CD4-positive, alpha-beta memory T cell (primary cell): ENCODE measurements at regions of chr5 and their contacts with region 1.

Region 1: GRCh38 chr5:139711067-139711905 is 63.1 kb downstream of the CXXC5 start:
- DNase-seq: peak; percentile 50 to 74 (median 60)
- H3K4me3 ChIP-seq: peak overlapping the region in 1 of 2 donors; percentile 51
- H3K4me3 Mint-ChIP-seq: peak overlapping the region; percentile 73 to 85 (median 80)
- H3K27ac ChIP-seq: peak overlapping the region; percentile 32
- H3K27ac Mint-ChIP-seq: peak overlapping the region; percentile 56 to 95 (median 69)
- H3K4me1 ChIP-seq: peaks cover 19% of the 10 kb centered on the region
- H3K4me1 Mint-ChIP-seq: peaks cover 8 to 32% (median 16%) of the 10 kb centered on the region in 4 donors
- H3K27me3 ChIP-seq: peaks cover 10% of the 10 kb centered on the region
- H3K27me3 Mint-ChIP-seq: peaks cover 7 to 15% of the 10 kb centered on the region in 2 donors

Region 2: DNA sequence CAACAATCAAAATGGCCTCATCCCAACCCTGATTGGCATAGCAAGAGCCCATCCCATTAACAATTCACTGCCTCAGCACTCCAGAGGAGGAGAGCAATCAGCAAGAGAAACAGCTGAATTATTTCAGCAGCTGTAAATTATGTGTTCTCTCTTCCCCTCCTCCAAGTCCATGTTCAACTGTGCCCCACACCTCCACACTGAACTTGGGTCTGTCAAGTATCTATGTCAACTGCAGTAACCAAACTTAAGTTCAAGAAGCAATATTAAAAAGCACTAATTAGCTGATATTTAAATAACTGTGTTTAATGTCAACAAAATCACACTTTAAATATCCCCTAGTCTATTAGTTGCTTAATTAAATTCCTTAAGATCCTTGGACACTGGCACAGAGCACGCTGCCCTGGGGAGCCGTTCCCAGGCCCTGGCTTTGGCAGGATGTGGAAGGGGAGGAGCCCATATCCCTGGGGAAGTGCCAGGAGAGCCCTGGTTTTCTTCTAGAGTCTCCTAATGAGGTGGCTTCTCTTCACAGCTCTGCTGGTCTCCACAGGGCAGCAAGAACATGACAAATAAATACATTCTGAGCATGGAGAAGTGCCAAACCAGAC is 563.7 kb before region 1 on chr5:
- CTCF ChIA-PET with region 1: no interaction called
- POLR2A ChIA-PET with region 1: no interaction called
- intact Hi-C with region 1: no loop called
- DNase-seq: no peak
- H3K4me3 ChIP-seq: no peak overlapping the region
- H3K4me3 Mint-ChIP-seq: no peak overlapping the region
- H3K27ac ChIP-seq: no peak overlapping the region
- H3K27ac Mint-ChIP-seq: no peak overlapping the region
- H3K4me1 ChIP-seq: no peaks in the 10 kb centered on the region
- H3K4me1 Mint-ChIP-seq: peaks cover 0 to 5% (median under 1%) of the 10 kb centered on the region in 4 donors
- H3K27me3 ChIP-seq: no peaks in the 10 kb centered on the region
- H3K27me3 Mint-ChIP-seq: no peaks in the 10 kb centered on the region

Region 3: DNA sequence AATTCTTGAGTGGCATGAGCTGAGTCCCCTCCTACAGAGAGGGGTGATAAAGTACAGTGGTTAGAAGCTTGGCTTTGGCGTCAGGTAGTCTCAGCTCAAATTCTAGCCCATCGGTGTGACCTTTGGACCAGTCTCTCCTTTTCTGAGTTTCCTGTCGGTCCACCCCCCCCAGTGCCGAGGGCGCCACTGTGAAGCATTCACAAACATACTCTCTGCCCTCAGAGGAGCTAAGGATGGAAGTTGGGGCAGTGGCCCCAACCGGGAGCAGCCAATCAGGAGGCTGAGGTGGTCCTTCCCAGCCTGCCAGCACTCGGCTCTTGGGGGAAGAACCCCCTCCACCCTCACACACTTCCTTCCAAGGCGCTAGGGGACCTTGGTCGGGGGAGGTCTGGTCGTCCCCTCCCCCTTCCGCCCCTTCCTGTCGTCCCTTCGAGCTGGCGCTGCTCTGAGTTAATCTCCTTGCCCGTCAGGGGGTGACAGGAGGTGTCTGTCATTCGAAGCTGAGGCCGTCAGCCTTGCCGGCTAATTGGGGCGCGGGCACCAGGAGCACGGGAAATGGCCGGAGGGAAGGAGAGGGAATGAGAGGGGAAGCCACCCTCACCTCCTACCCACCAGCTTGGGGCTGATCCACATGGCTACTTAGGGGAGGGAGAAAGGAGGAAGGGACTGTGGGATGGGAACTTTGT is 10.1 kb before region 1 on chr5:
- CTCF ChIA-PET with region 1: interaction called, 5 read pairs
- POLR2A ChIA-PET with region 1: interaction called, 10 read pairs
- intact Hi-C with region 1: no loop called
- DNase-seq: no peak
- H3K4me3 ChIP-seq: no peak overlapping the region
- H3K4me3 Mint-ChIP-seq: no peak overlapping the region
- H3K27ac ChIP-seq: no peak overlapping the region
- H3K27ac Mint-ChIP-seq: no peak overlapping the region
- H3K4me1 ChIP-seq: peaks cover 8% of the 10 kb centered on the region
- H3K4me1 Mint-ChIP-seq: peaks cover 7 to 22% (median 14%) of the 10 kb centered on the region in 4 donors
- H3K27me3 ChIP-seq: peaks cover 8% of the 10 kb centered on the region
- H3K27me3 Mint-ChIP-seq: peaks cover 24 to 26% of the 10 kb centered on the region in 2 donors

Region 4: DNA sequence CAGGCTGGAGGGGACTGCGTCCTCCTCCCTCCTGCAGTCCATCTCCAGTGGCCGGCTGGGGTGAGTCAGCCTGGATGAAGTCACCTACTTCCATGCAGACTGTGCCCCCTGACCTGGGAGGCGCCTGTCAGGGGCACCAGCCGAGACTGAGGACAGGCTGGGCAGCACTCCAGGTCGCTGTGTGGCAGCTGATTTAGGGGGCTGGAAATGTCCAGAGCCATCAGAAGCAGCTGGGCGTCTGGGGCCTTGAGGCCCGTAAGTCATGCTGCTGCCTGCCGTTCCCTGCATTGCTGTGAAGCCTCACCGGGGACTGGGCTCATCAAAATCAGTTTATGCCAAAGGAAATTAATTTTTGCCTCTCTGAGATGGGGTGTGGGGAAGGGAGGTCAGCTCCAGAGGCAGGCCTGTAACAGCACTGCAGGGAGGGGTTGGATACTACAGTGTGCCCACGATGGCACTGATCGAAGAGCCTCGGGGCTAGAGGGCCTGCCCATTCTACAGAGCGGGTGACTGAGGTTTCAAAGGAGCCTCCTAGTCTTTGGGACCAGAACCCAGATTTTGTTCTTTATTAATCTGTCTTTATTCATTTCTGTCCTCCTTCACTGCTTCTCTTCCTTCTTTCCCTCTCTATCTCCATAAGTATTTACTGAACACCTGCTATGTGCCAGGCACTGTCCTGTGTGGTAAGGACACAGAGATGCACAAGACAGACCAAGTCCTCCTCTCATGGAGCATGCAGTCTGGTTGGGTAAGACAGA is 14.0 kb after region 1 on chr5:
- CTCF ChIA-PET with region 1: no interaction called
- POLR2A ChIA-PET with region 1: no interaction called
- intact Hi-C with region 1: no loop called
- DNase-seq: no peak
- H3K4me3 ChIP-seq: no peak overlapping the region
- H3K4me3 Mint-ChIP-seq: no peak overlapping the region
- H3K27ac ChIP-seq: no peak overlapping the region
- H3K27ac Mint-ChIP-seq: no peak overlapping the region
- H3K4me1 ChIP-seq: no peaks in the 10 kb centered on the region
- H3K4me1 Mint-ChIP-seq: no peaks in the 10 kb centered on the region
- H3K27me3 ChIP-seq: no peaks in the 10 kb centered on the region
- H3K27me3 Mint-ChIP-seq: peaks cover 0 to 2% of the 10 kb centered on the region in 2 donors

Region 5: GRCh38 chr5:139745800-139746690 is 34.8 kb after region 1 on chr5:
- CTCF ChIA-PET with region 1: no interaction called
- POLR2A ChIA-PET with region 1: interaction called, 11 read pairs
- intact Hi-C with region 1: loop called (anchors 2 kb)
- DNase-seq: peak; percentile 35 to 59 (median 45)
- H3K4me3 ChIP-seq: peak overlapping the region in 1 of 2 donors; percentile 60
- H3K4me3 Mint-ChIP-seq: peak overlapping the region; percentile 82 to 97 (median 90)
- H3K27ac ChIP-seq: no peak overlapping the region
- H3K27ac Mint-ChIP-seq: peak overlapping the region in 4 of 7 donors; percentile 15 to 68 (median 46)
- H3K4me1 ChIP-seq: peaks cover 19% of the 10 kb centered on the region
- H3K4me1 Mint-ChIP-seq: peaks cover 12 to 41% (median 18%) of the 10 kb centered on the region in 4 donors
- H3K27me3 ChIP-seq: no peaks in the 10 kb centered on the region
- H3K27me3 Mint-ChIP-seq: peaks cover 8 to 14% of the 10 kb centered on the region in 2 donors